CD8-positive, alpha-beta memory T cell (primary cell): ENCODE measurements at regions of chr11 and their contacts with region 1.

Region 1: DNA sequence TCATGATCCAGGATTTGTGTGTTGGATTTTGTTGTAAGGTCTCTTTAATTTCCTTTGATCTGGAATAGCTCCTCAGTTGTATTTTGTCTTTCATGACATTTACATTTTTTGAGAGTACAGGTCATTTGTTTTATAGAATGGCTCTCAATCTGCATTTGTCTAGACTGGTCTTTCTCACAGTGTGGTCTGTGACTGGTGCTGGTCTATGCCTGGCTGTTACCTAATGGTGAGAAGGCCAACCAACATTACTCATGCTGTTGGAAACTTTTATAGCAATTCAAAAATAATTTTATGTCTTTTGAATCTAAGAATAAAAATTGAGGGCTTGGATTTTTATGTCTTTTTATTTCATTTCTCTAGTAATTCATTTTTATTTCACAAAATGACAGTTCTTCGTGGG is 3.9 kb upstream of the NCR3LG1 start:
- DNase-seq: no peak
- H3K4me3 ChIP-seq: no peak overlapping the region
- H3K4me3 Mint-ChIP-seq: no peak overlapping the region
- H3K27ac ChIP-seq: no peak overlapping the region
- H3K27ac Mint-ChIP-seq: no peak overlapping the region
- H3K4me1 ChIP-seq: peaks cover 5% of the 10 kb centered on the region
- H3K4me1 Mint-ChIP-seq: peaks cover 12 to 23% (median 13%) of the 10 kb centered on the region in 3 donors
- H3K27me3 ChIP-seq: no peaks in the 10 kb centered on the region
- H3K27me3 Mint-ChIP-seq: peaks cover 0 to 1% of the 10 kb centered on the region in 2 donors

Region 2: DNA sequence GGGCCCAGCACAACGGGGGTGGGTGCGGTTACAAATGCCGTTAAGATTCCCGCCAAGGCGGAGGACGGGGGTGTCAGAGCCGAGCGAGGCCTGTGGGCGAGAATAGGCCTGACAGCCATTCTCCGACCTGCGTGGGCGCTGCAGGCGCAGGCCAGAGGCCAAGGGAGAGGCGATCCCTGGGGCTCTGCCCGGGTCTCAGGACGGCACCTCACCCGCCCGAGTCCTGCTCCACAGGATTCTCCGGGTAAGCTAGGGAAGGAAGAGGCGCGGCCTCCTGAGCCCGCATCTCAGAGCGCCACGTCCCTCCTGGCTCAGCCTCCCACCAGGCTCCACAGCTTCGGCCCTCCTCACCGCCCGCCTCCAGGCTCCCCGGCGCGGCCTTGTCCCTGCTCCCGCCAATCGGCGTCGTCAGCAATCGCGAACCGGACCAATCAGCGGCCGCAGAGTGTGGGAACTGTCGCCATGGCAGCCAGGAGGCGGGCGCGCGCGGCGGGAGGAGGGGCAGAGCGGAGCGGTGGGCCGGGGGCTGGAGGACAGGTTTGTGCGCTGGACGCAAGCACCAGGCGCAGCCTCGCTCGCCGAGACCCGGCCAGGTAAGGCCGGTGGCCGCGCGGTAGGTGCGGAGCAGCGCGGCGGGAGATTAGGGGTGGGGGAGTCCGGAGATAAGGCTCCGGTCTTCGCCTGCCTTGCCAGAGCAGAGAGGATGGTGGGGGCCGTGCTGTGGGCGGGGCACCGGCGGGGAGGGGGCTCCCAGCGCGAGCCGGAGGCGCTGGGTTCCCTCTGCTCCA is 71.2 kb before region 1 on chr11 and contains the start of gene NUCB2:
- CTCF ChIA-PET with region 1: interaction called, 3 read pairs
- POLR2A ChIA-PET with region 1: interaction called, 12 read pairs
- DNase-seq: peak; percentile 93 to 97 (median 95)
- H3K4me3 ChIP-seq: peak within 1 kb of the TSS; percentile 90
- H3K4me3 Mint-ChIP-seq: peak within 1 kb of the TSS; percentile 79 to 99 (median 83)
- H3K27ac ChIP-seq: peak within 1 kb of the TSS; percentile 76
- H3K27ac Mint-ChIP-seq: peak within 1 kb of the TSS; percentile 76 to 98 (median 86)
- H3K4me1 ChIP-seq: peaks cover 31% of the 10 kb centered on the region
- H3K4me1 Mint-ChIP-seq: peaks cover 34 to 61% (median 38%) of the 10 kb centered on the region in 3 donors
- H3K27me3 ChIP-seq: no peaks in the 10 kb centered on the region
- H3K27me3 Mint-ChIP-seq: no peaks in the 10 kb centered on the region
- total RNA-seq, gene NUCB2: 30.3 to 33.3 TPM